ENCODE measurements at regions of chr21 and their contacts with region 1.

Region 1: GRCh38 chr21:29449306-29449950 is 150.7 kb downstream of the BACH1 start:
- DNase-seq: peak in 7 of 9 donors; percentile 50 to 90 (median 76)
- ATAC-seq: peak; percentile 93
- H3K4me3 ChIP-seq: peak overlapping the region; percentile 17
- H3K4me3 Mint-ChIP-seq: peak overlapping the region; percentile 1 to 77 (median 64)
- H3K27ac ChIP-seq: peak overlapping the region; percentile 66
- H3K27ac Mint-ChIP-seq: peak overlapping the region; percentile 84 to 98 (median 94)
- H3K4me1 ChIP-seq: peaks cover 7 to 17% of the 10 kb centered on the region in 2 donors
- H3K4me1 Mint-ChIP-seq: peaks cover 5 to 67% (median 24%) of the 10 kb centered on the region in 7 donors
- H3K27me3 ChIP-seq: no peaks in the 10 kb centered on the region
- H3K27me3 Mint-ChIP-seq: no peaks in the 10 kb centered on the region

Region 2: DNA sequence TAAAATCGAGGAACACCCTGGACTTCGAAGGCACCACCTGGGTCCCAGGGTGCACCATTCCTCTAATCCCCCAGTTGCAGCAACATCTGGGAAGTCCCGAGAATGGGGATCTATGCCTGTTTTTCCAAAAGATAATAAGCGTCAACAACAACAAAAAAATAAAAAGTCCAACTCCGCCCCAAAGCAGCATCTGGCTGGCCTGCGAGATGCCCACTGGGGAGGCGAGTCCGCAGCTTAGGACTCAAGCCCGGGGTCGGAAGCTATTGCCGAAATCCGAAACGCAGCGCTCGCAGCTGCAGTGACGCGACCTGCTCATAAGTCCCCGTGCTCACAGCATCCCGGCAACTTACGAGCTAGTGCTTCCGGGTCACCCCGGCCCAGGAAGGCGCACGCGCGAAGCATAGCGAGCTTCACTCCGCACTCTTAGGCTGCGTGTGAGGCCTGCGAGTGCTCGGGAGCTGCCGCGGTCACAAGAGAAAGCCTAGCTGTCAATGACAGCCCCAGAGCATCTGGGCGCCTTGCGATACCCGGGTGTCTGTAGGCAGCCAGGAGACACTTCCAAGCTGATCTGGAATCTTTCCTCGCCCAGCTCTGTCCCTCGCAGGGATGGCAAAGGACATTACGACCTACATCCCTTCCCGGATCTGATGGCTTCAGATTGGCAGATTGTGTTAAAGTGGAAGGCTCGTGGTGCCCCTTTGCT is 446.8 kb before region 1 on chr21:
- CTCF ChIA-PET with region 1: no interaction called
- POLR2A ChIA-PET with region 1: interaction called, 5 read pairs
- intact Hi-C with region 1: loop called in 1 of 2 experiments (anchors 10 kb)
- DNase-seq: peak; percentile 90 to 96 (median 94)
- ATAC-seq: peak; percentile 100
- H3K4me3 ChIP-seq: peak overlapping the region; percentile 86
- H3K4me3 Mint-ChIP-seq: peak overlapping the region; percentile 85 to 95 (median 93)
- H3K27ac ChIP-seq: peak overlapping the region; percentile 92
- H3K27ac Mint-ChIP-seq: peak overlapping the region; percentile 97 to 99 (median 99)
- H3K4me1 ChIP-seq: peaks cover 0 to 3% of the 10 kb centered on the region in 2 donors
- H3K4me1 Mint-ChIP-seq: peaks cover 0 to 22% (median 10%) of the 10 kb centered on the region in 7 donors
- H3K27me3 ChIP-seq: no peaks in the 10 kb centered on the region
- H3K27me3 Mint-ChIP-seq: no peaks in the 10 kb centered on the region

Region 3: GRCh38 chr21:29208682-29209059 is 240.8 kb before region 1 on chr21:
- CTCF ChIA-PET with region 1: no interaction called
- POLR2A ChIA-PET with region 1: no interaction called
- intact Hi-C with region 1: no loop called
- DNase-seq: no peak
- ATAC-seq: peak; percentile 63
- H3K4me3 ChIP-seq: no peak overlapping the region
- H3K4me3 Mint-ChIP-seq: no peak overlapping the region
- H3K27ac ChIP-seq: no peak overlapping the region
- H3K27ac Mint-ChIP-seq: no peak overlapping the region
- H3K4me1 ChIP-seq: no peaks in the 10 kb centered on the region
- H3K4me1 Mint-ChIP-seq: peaks cover 0 to 16% (median 0%) of the 10 kb centered on the region in 7 donors
- H3K27me3 ChIP-seq: no peaks in the 10 kb centered on the region
- H3K27me3 Mint-ChIP-seq: peaks cover 0 to 4% (median 0%) of the 10 kb centered on the region in 5 donors

Region 4: GRCh38 chr21:29403922-29404538 is 45.4 kb before region 1 on chr21:
- CTCF ChIA-PET with region 1: no interaction called
- POLR2A ChIA-PET with region 1: interaction called, 3 read pairs
- intact Hi-C with region 1: loop called in 1 of 2 experiments (anchors 5 kb)
- DNase-seq: no peak
- ATAC-seq: peak; percentile 20
- H3K4me3 ChIP-seq: no peak overlapping the region
- H3K4me3 Mint-ChIP-seq: no peak overlapping the region
- H3K27ac ChIP-seq: no peak overlapping the region
- H3K27ac Mint-ChIP-seq: no peak overlapping the region
- H3K4me1 ChIP-seq: no peaks in the 10 kb centered on the region
- H3K4me1 Mint-ChIP-seq: peaks cover 0 to 12% (median 4%) of the 10 kb centered on the region in 7 donors
- H3K27me3 ChIP-seq: no peaks in the 10 kb centered on the region
- H3K27me3 Mint-ChIP-seq: peaks cover 0 to 3% (median 0%) of the 10 kb centered on the region in 5 donors

Region 5: GRCh38 chr21:29424728-29425127 is 24.7 kb before region 1 on chr21:
- CTCF ChIA-PET with region 1: no interaction called
- POLR2A ChIA-PET with region 1: interaction called, 6 read pairs
- intact Hi-C with region 1: loop called in 1 of 2 experiments (anchors 2 kb)
- DNase-seq: no peak
- ATAC-seq: no peak
- H3K4me3 ChIP-seq: no peak overlapping the region
- H3K4me3 Mint-ChIP-seq: no peak overlapping the region
- H3K27ac ChIP-seq: no peak overlapping the region
- H3K27ac Mint-ChIP-seq: peak overlapping the region in 1 of 9 donors; percentile 81
- H3K4me1 ChIP-seq: no peaks in the 10 kb centered on the region
- H3K4me1 Mint-ChIP-seq: peaks cover 0 to 23% (median 0%) of the 10 kb centered on the region in 7 donors
- H3K27me3 ChIP-seq: no peaks in the 10 kb centered on the region
- H3K27me3 Mint-ChIP-seq: no peaks in the 10 kb centered on the region

Region 6: GRCh38 chr21:29436143-29436542 is 13.3 kb before region 1 on chr21:
- CTCF ChIA-PET with region 1: no interaction called
- POLR2A ChIA-PET with region 1: interaction called, 34 read pairs
- intact Hi-C with region 1: loop called in 1 of 2 experiments (anchors 1 kb)
- DNase-seq: peak in 8 of 9 donors; percentile 28 to 69 (median 54)
- ATAC-seq: peak; percentile 90
- H3K4me3 ChIP-seq: peak overlapping the region; percentile 41
- H3K4me3 Mint-ChIP-seq: peak overlapping the region; percentile 80 to 91 (median 88)
- H3K27ac ChIP-seq: peak overlapping the region; percentile 63
- H3K27ac Mint-ChIP-seq: peak overlapping the region; percentile 81 to 98 (median 94)
- H3K4me1 ChIP-seq: peaks cover 10 to 17% of the 10 kb centered on the region in 2 donors
- H3K4me1 Mint-ChIP-seq: peaks cover 12 to 55% (median 34%) of the 10 kb centered on the region in 7 donors
- H3K27me3 ChIP-seq: no peaks in the 10 kb centered on the region
- H3K27me3 Mint-ChIP-seq: no peaks in the 10 kb centered on the region

Region 7: DNA sequence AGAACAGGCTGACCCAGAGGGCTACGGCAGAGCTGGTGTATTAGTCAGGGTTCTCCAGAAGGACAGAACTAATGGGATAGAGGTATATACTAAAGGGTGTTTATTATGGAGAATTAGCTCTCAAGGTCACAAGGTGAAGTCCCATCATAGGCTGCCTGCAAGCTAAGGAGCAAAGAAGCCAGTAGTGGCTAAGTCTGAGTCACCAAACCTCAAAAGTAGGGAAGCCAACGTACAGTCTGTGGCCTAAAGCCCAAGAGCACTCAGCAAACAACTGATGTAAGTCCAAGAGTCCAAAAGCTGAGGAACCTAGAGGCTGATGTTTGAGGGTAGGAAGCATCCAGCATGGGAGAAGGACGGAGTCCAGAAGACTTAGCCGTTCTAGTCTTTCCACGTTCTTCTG is 28.5 kb after region 1 on chr21:
- CTCF ChIA-PET with region 1: interaction called, 8 read pairs
- POLR2A ChIA-PET with region 1: interaction called, 3 read pairs
- intact Hi-C with region 1: loop called (anchors 1 to 2 kb)
- DNase-seq: no peak
- ATAC-seq: no peak
- H3K4me3 ChIP-seq: no peak overlapping the region
- H3K4me3 Mint-ChIP-seq: no peak overlapping the region
- H3K27ac ChIP-seq: no peak overlapping the region
- H3K27ac Mint-ChIP-seq: peak overlapping the region in 1 of 9 donors; percentile 5
- H3K4me1 ChIP-seq: no peaks in the 10 kb centered on the region
- H3K4me1 Mint-ChIP-seq: peaks cover 3 to 18% (median 11%) of the 10 kb centered on the region in 7 donors
- H3K27me3 ChIP-seq: no peaks in the 10 kb centered on the region
- H3K27me3 Mint-ChIP-seq: no peaks in the 10 kb centered on the region

Region 8: DNA sequence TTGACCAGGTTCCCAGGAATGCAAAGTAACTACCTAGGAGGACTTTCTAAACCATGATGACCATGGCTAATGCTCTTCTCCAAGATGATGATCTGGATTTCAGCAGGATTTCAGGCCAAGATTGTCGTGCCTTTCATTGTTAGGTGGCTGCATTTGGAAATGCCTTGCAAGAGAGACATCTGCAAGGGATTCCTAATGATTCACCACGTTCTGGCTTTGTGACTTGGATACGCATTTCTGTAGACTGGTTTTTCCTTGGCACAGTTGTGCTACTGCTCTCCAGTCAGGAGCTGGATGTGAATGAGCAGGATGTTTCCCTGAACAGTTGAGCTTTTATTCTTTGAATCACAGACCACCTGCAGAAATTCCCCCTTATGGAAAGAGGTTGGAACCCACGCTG is 61.7 kb after region 1 on chr21:
- CTCF ChIA-PET with region 1: no interaction called
- POLR2A ChIA-PET with region 1: no interaction called
- intact Hi-C with region 1: no loop called
- DNase-seq: no peak
- ATAC-seq: no peak
- H3K4me3 ChIP-seq: no peak overlapping the region
- H3K4me3 Mint-ChIP-seq: no peak overlapping the region
- H3K27ac ChIP-seq: no peak overlapping the region
- H3K27ac Mint-ChIP-seq: no peak overlapping the region
- H3K4me1 ChIP-seq: no peaks in the 10 kb centered on the region
- H3K4me1 Mint-ChIP-seq: peaks cover 0 to 2% (median 0%) of the 10 kb centered on the region in 7 donors
- H3K27me3 ChIP-seq: no peaks in the 10 kb centered on the region
- H3K27me3 Mint-ChIP-seq: no peaks in the 10 kb centered on the region